Activated T-helper 1 cell treated with anti-CD3 and anti-CD28 coated beads, Interleukin-12 subunit alpha, Interleukin-12 subunit beta, Interleukin-2, Interleukin-4 antibody, amounts not matched to agents 30 ng/mL and 10 ng/mL and 1 ng/mL, durations not matched to agents 14 hours and 24 hours and 36 hours (primary cell): ENCODE measurements at regions of chr10 and their contacts with region 1.

Region 1: DNA sequence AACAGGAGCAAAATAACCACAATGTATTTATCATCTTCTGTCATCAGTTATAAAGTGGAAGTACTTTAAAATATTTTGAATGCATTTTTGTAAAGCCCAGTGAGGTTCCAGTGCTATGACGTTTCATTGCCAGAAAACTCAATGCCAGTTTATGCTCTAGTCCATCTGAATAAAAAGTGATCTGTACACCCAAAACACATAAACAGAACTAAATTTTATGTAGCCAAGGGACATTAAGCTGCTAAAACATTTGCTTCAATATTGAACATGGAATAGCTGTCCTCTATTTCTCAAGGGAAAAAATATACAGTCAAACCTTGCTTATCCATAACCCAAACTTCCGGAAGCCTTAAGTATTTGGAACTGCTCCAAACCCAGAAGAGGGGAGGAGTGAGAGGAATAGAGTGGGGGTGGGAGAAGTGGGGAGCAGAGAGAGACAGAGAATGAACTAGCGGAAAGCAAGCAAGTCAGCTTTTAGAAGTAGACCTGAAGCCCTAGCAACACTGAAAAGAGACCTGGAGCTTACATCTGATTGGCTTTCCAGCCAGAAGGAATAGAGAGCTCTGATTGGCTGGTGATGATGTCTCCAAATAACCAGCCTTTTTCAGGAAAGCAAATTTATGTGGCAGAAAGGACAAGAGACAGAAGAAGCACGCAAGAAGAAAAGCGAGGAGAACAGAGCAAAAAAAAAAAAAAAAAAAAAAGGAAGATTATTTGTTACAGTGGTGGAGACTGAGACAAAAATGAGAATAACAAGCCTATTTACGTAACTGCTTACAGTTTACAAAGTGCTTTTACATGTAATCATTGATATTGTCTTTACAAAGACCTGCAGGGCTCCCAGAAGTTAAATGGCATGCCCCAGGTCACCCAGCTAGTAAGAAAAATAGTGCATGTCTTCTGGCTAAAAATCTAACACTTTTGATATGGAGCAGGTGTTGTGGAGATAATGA is 196.0 kb downstream of the RNLS start:
- DNase-seq: no peak
- H3K4me3 Mint-ChIP-seq: no peak overlapping the region
- H3K27ac Mint-ChIP-seq: no peak overlapping the region
- H3K4me1 Mint-ChIP-seq: peaks cover 16% of the 10 kb centered on the region
- H3K27me3 Mint-ChIP-seq: no peaks in the 10 kb centered on the region

Region 2: DNA sequence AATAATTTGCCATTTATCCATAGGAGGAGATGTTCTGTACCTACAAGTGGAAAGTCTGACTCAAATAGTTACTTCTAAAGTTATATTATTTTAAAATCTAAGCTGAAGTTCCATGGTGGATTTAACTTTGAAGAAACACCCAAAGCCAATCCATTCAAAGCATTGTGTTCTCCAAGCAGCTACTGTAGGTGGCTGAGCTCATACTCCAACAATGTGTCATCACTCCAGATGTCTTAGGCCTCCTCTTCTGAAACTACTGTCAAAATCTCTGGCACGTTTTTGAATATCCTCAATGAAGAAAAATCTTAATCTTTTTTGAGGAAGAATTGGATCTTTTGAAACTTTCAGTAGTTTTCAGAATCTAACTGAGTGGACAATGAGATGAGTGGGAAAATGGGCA is 354.5 kb before region 1 on chr10:
- intact Hi-C with region 1: loop called (anchors 5 kb)
- DNase-seq: no peak
- H3K4me3 Mint-ChIP-seq: no peak overlapping the region
- H3K27ac Mint-ChIP-seq: no peak overlapping the region
- H3K4me1 Mint-ChIP-seq: peaks cover 19% of the 10 kb centered on the region
- H3K27me3 Mint-ChIP-seq: peaks cover 5% of the 10 kb centered on the region

Region 3: DNA sequence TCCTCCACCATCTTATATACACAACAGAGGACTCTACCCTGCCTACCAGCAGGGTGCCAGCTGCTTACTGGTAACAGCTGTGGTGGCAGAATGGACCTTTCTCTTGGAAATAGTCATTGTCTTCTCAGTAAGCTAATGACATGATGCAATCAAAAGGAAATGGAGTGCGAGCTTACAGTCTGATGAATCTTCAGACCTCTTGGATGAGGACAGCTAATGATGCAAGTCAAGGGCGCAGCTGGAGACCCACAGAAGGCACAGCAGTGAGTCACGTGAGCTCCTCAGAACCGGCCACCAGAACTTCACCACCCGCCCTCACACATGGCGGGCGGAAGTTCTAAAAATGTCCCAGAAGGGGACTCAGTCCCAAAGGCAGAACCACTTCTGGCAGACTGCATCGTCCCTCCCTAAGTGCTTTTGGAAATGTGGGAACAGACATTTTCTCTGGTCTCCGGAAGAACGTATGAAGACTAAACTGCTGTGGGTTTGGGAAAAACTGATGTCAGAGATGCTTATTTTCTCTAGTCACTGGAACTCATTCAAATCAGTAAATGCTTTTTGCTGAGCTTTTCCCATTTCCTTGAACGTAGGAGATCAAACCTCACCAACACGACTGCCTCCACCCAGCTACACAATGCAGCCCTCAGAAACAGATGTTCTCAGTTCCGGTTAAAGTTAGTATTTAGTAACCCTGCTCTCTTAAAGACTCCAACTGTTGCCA is 699.9 kb after region 1 on chr10:
- intact Hi-C with region 1: no loop called
- DNase-seq: no peak
- H3K4me3 Mint-ChIP-seq: no peak overlapping the region
- H3K27ac Mint-ChIP-seq: no peak overlapping the region
- H3K4me1 Mint-ChIP-seq: peaks cover 9% of the 10 kb centered on the region
- H3K27me3 Mint-ChIP-seq: peaks cover 15% of the 10 kb centered on the region